Dorsolateral prefrontal cortex (tissue), 120 donors: ENCODE measurements at regions of chr1 and their contacts with region 1.

Region 1: DNA sequence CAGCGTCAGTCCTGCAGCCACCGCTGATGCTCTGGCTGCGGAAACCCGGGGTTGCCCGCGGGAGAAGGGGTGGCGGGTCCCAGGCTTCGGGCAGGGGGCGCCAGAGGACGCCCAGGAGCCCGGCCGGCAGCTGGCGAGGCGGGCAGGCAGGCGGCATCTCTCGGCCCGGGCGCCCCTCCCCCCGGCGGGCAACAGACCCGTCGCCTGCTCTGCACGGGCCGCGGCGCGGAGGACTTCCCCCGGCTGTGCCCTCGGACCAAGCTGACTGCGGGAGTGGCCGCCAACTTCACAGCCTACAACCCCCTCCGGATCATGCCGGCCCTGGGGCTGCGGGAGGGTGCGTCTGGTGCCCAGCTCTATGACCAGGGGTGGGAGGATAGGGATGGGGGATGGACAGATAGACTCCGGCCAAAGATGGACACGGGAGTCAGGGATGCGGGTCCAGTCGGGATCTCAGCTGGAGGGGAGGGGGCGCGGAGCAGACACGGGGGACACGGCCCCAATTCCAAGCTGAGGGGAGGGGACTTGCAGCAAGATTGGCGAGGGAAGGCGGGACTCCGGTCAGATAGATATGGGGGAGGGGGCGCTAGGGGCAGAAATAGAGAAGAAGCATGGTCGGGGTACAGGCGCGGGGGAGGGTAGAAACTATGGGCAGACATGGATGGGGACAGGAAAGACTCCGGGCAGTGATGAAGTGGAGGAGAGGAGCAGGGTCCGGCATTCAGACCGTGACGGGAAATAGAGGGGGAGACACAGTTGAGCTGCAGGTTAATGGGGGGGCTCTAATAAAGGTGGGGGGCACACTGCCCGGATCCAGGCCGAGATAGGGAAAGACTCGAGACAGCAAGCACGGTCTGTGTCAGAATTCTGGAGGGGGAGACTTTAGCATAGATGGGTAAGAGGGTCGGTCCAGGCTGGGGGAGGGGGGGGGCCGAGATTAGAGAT is 1.1 kb downstream of the ADGRB2 start:
- DNase-seq: peak; percentile 68 to 89 (median 80)
- H3K4me3 ChIP-seq: peak overlapping the region; percentile 48 to 95 (median 73)
- H3K27ac ChIP-seq: peak overlapping the region in 48 of 59 donors; percentile 0 to 88 (median 70)
- H3K27me3 ChIP-seq: no peaks in the 10 kb centered on the region
- CTCF ChIP-seq: peak; percentile 47 to 90 (median 78)

Region 2: GRCh38 chr1:31715087-31715872 is 47.7 kb before region 1 on chr1:
- intact Hi-C with region 1: loop called in 1 of 2 experiments (anchors 5 kb)
- DNase-seq: peak; percentile 66 to 96 (median 77)
- H3K4me3 ChIP-seq: peak overlapping the region; percentile 34 to 71 (median 55)
- H3K27ac ChIP-seq: peak overlapping the region in 58 of 59 donors; percentile 6 to 94 (median 81)
- H3K27me3 ChIP-seq: no peaks in the 10 kb centered on the region
- CTCF ChIP-seq: peak; percentile 57 to 95 (median 84)

Region 3: GRCh38 chr1:31789259-31790065 is 26.5 kb after region 1 on chr1:
- intact Hi-C with region 1: loop called (anchors 1 kb)
- DNase-seq: peak; percentile 94 to 99 (median 95)
- H3K4me3 ChIP-seq: peak overlapping the region; percentile 57 to 91 (median 77)
- H3K27ac ChIP-seq: peak overlapping the region; percentile 14 to 99 (median 96)
- H3K27me3 ChIP-seq: no peaks in the 10 kb centered on the region
- CTCF ChIP-seq: peak; percentile 61 to 96 (median 89)

Region 4: DNA sequence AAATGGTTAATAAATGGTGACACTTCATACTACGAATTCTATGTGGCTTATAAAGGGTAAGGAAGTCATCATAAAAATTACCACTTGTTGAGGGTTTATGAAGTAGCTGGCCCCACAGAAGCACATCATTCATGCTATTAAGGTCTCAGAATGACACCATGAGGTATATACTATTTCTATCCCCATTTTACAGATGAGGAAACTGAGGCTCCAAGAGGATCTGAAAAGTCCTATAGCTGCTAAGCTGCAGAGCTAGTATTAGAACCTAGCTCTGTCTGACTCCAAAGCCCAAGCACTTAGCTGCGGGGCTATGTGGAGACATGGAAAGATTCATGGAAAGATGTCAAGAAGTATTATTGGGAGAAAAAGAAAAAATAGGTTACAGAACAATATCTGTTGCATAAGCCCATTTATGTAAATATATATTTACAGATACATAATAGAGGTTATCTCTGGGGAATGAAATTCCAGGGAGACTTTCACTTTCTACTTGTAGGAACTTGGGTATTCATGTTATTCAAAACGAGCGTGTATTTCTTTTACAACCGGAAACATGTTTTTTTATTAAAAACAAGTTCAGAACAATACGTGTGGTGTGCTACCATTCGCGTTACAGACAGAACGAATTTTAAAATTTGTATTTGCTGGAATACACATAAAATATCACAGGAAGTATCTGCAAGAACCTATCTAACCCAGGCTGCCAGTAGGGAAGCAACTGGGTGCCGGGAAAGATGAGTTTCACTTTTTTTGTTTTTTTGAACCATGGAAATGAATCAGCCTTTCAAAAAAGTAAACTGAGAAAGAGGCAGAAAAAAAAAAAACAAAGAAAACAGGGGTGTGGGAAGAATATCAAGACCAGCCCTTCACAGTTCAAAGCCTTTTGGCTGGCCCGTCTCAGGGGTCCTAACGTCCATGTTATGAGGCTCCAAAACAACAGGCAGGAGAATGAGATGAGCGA is 39.5 kb after region 1 on chr1:
- intact Hi-C with region 1: no loop called
- DNase-seq: peak in 1 of 10 donors; percentile 25
- H3K4me3 ChIP-seq: peak overlapping the region in 56 of 59 donors; percentile 5 to 61 (median 41)
- H3K27ac ChIP-seq: peak overlapping the region; percentile 14 to 95 (median 82)
- H3K27me3 ChIP-seq: no peaks in the 10 kb centered on the region
- CTCF ChIP-seq: peak in 7 of 56 donors; percentile 8 to 33 (median 15)

Region 5: DNA sequence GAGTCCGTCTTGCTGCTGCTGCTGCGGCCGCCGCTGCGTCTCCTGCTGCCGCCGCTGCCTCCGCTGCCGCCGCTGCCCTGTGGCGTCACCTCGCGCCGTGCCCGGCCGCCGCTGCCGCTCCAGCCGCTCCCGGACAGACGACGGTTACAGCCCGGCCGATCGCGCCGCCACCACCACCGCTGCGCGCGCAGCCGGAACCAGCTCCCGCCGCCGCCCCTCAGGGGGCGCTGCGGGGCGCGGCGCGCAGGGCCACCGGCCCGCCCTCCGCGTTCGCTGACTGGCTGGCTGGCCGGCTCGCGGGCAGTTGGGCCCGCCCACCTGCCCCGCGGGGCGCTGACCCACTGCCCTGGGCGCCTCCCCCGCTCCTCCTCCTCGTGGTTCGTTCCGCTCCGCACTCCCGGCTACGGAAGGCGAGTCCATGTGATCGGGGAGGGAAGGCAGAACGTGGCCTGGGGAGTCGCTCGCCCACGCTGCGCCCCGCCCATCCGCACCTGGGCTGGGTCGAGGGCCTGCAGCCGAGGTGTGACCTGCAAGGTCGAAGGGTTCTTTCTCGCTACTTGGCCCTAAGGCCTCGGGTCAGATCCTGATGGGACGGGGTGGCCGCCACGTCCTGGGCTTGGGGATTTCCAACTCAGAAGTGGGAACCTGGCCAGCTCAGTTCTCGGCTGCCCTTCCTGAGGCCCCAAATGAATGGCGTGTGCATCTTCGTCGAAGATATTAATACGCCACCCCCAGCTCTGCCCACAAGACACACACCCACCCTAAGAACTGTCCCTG is 175.4 kb after region 1 on chr1 and contains the start of gene PTP4A2:
- intact Hi-C with region 1: loop called in 1 of 2 experiments (anchors 10 kb)
- DNase-seq: peak; percentile 81 to 94 (median 90)
- H3K4me3 ChIP-seq: peak within 1 kb of the TSS; percentile 51 to 91 (median 76)
- H3K27ac ChIP-seq: peak within 1 kb of the TSS; percentile 78 to 98 (median 91)
- H3K27me3 ChIP-seq: no peaks in the 10 kb centered on the region
- CTCF ChIP-seq: peak in 44 of 56 donors; percentile 7 to 82 (median 51)
- total RNA-seq, gene PTP4A2: 185 to 784 (median 393) TPM

Region 6: DNA sequence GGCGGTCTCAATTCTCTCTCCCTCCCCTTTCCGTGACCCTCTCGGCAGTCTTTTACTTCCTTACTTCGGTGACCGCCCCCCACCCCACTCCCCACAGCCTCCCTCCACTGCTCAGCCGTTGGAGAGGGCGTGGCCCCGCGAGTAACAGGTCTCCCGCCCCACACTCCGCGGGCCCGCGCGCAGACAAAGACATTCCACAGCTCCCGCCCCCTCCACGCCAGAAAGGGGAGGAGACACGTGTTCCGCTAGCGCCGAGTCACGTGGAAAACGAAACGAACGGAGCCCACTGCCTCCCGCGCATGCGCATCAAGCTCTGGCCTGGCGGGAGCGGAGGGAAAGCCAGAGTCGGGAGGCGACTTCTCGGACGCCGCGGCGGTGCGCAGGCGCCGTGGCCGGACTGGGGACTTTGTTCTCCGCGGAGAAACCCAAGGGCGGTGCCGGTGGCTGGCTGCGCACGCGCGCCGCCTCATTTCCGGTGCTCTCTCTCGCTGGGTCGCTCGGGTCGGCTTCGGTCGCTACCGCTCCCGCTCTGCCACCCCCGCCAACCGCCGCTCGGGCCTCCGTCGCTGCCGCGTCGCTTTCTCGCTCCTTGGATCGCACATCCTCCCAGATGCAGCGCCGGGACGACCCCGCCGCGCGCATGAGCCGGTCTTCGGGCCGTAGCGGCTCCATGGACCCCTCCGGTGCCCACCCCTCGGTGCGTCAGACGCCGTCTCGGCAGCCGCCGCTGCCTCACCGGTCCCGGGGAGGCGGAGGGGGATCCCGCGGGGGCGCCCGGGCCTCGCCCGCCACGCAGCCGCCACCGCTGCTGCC is 250.6 kb after region 1 on chr1 and contains the start of gene KHDRBS1:
- intact Hi-C with region 1: loop called in 1 of 2 experiments (anchors 5 kb)
- DNase-seq: peak; percentile 96 to 98 (median 98)
- H3K4me3 ChIP-seq: peak within 1 kb of the TSS; percentile 73 to 100 (median 98)
- H3K27ac ChIP-seq: peak within 1 kb of the TSS; percentile 81 to 100 (median 97)
- H3K27me3 ChIP-seq: no peaks in the 10 kb centered on the region
- CTCF ChIP-seq: peak in 28 of 56 donors; percentile 5 to 51 (median 26)
- total RNA-seq, gene KHDRBS1: 50.0 to 101 (median 75.5) TPM

Region 7: GRCh38 chr1:32063261-32063681 is 300.3 kb after region 1 on chr1:
- intact Hi-C with region 1: loop called (anchors 5 kb)
- DNase-seq: no peak
- H3K4me3 ChIP-seq: no peak overlapping the region
- H3K27ac ChIP-seq: peak overlapping the region in 58 of 59 donors; percentile 21 to 87 (median 74)
- H3K27me3 ChIP-seq: no peaks in the 10 kb centered on the region
- CTCF ChIP-seq: peak; percentile 50 to 87 (median 73)